ENCODE measurements at regions of chr1 and their contacts with region 1.

Region 1: GRCh38 chr1:222171005-222171404 is 376.9 kb downstream of the HHIPL2 start:
- DNase-seq: peak; percentile 23
- ATAC-seq: peak; percentile 86
- H3K4me3 ChIP-seq: no peak overlapping the region
- H3K27ac ChIP-seq: no peak overlapping the region
- H3K4me1 ChIP-seq: no peaks in the 10 kb centered on the region
- H3K27me3 ChIP-seq: no peaks in the 10 kb centered on the region
- CTCF ChIP-seq: peak; percentile 47 to 78 (median 66)
- EP300 ChIP-seq: no peak
- POLR2A ChIP-seq: no peak
- RAD21 ChIP-seq: peak; percentile 78

Region 2: DNA sequence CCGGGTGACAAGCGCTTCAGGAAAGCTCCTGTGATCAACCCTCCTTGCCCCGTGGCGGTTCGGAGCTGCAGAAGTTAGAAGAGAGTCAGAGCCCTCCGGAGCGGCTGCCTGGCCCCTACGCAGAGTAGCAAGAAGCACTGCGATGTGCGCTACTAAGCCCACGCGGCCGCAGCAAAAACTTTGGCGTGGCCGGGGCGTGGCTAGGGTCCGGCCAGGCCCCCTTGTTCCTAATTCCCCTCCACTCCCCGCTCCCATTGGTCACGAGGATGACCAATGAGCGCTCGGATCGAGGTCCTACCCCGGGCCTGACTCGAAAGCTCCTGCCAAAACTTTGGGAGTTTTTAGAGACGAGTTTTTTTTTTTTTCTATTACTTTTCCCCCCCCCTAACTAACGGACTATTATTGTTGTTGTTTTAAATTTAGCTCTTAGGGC is 1291.9 kb before region 1 on chr1 and contains the start of gene HLX:
- CTCF ChIA-PET with region 1: interaction called, 3 read pairs
- POLR2A ChIA-PET with region 1: no interaction called
- RAD21 ChIA-PET with region 1: interaction called, 4 read pairs
- SMC1A ChIA-PET with region 1: no interaction called
- in situ Hi-C with region 1: no loop called
- intact Hi-C with region 1: loop called (anchors 10 kb)
- DNase-seq: no peak
- ATAC-seq: peak; percentile 82
- H3K4me3 ChIP-seq: peak within 1 kb of the TSS; percentile 68
- H3K27ac ChIP-seq: no peak within 1 kb of the TSS
- H3K4me1 ChIP-seq: peaks cover 15% of the 10 kb centered on the region
- H3K27me3 ChIP-seq: peaks cover 0 to 17% of the 10 kb centered on the region in 2 experiments; a peak in 3 of 4 replicates
- CTCF ChIP-seq: no peak
- EP300 ChIP-seq: no peak
- POLR2A ChIP-seq: no peak
- RAD21 ChIP-seq: no peak
- polyA plus RNA-seq, gene HLX: 0.11 to 0.22 TPM

Region 3: DNA sequence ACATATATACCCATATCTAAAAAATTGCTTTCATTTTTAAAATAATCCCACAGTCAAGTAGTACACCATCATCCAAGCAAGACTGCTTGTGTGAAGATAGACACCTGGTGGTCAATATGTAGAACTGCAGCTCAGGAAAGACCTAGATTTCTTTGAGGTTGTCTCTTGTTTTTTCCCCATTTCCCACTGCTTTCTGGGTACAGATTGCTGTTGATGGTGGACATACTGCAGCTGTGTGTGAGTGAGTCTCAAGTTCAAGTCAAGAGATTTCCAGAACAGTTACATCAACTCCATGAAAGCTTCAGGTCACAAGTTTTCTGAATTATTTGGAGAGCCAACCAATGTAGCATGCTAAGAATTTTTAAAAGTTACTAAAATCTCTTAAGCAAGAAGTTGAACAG is 735.5 kb before region 1 on chr1:
- CTCF ChIA-PET with region 1: interaction called, 15 read pairs
- POLR2A ChIA-PET with region 1: no interaction called
- RAD21 ChIA-PET with region 1: interaction called, 10 read pairs
- SMC1A ChIA-PET with region 1: interaction called, 3 read pairs
- in situ Hi-C with region 1: no loop called
- intact Hi-C with region 1: loop called (anchors 5 kb)
- DNase-seq: no peak
- ATAC-seq: peak; percentile 55
- H3K4me3 ChIP-seq: no peak overlapping the region
- H3K27ac ChIP-seq: no peak overlapping the region
- H3K4me1 ChIP-seq: 0 out of 2 replicates have a peak, but pooled peaks cover 4% of the 10 kb centered on the region
- H3K27me3 ChIP-seq: no peaks in the 10 kb centered on the region
- CTCF ChIP-seq: peak; percentile 78 to 90 (median 80)
- EP300 ChIP-seq: no peak
- POLR2A ChIP-seq: no peak
- RAD21 ChIP-seq: peak; percentile 88

Region 4: DNA sequence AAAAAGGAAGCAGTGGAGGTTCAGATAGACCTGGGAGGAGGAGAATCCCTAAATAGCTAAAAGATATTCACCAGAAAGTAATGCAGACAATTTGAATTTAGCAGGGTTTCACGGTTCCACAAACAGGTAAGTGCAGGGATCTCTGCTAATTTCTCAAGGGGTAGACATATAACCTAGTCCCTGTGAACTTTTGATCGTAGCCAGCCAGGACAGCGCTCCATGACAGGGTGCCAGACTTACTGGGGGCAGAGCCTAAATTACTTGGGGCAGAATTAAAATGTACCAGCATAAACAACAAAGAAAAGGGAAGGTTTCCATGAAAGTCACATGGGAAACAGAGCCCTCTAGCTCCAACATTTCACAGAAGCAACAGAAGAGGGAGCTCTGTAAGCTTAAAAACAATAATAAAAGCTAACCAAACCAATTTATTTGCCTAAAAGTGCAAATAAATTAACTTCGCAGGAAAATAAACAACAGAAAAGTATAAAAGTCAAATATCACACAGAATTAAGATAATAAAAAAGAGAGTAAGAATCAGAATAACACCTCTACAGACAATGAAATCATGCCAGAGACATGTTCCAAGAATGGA is 627.4 kb before region 1 on chr1:
- CTCF ChIA-PET with region 1: interaction called, 19 read pairs
- POLR2A ChIA-PET with region 1: no interaction called
- RAD21 ChIA-PET with region 1: interaction called, 19 read pairs
- SMC1A ChIA-PET with region 1: interaction called, 9 read pairs
- in situ Hi-C with region 1: no loop called
- intact Hi-C with region 1: loop called (anchors 5 kb)
- DNase-seq: no peak
- ATAC-seq: peak; percentile 64
- H3K4me3 ChIP-seq: no peak overlapping the region
- H3K27ac ChIP-seq: no peak overlapping the region
- H3K4me1 ChIP-seq: no peaks in the 10 kb centered on the region
- H3K27me3 ChIP-seq: no peaks in the 10 kb centered on the region
- CTCF ChIP-seq: peak; percentile 39 to 57 (median 53); a peak in 5 of 6 replicates
- EP300 ChIP-seq: no peak
- POLR2A ChIP-seq: no peak
- RAD21 ChIP-seq: peak; percentile 66

Region 5: GRCh38 chr1:221736714-221737113 is 434.3 kb before region 1 on chr1:
- CTCF ChIA-PET with region 1: interaction called, 4 read pairs
- POLR2A ChIA-PET with region 1: no interaction called
- RAD21 ChIA-PET with region 1: interaction called, 7 read pairs
- SMC1A ChIA-PET with region 1: interaction called, 4 read pairs
- in situ Hi-C with region 1: no loop called
- intact Hi-C with region 1: loop called (anchors 2 kb)
- DNase-seq: no peak
- ATAC-seq: peak; percentile 47
- H3K4me3 ChIP-seq: peak overlapping the region; percentile 90
- H3K27ac ChIP-seq: no peak overlapping the region
- H3K4me1 ChIP-seq: peaks cover 11% of the 10 kb centered on the region
- H3K27me3 ChIP-seq: no peaks in the 10 kb centered on the region
- CTCF ChIP-seq: no peak
- EP300 ChIP-seq: no peak
- POLR2A ChIP-seq: 0 out of 2 replicates have a peak, but pooled peaks have one; percentile 25
- RAD21 ChIP-seq: no peak

Region 6: GRCh38 chr1:222048094-222048595 is 122.9 kb before region 1 on chr1:
- CTCF ChIA-PET with region 1: no interaction called
- POLR2A ChIA-PET with region 1: no interaction called
- RAD21 ChIA-PET with region 1: no interaction called
- SMC1A ChIA-PET with region 1: no interaction called
- in situ Hi-C with region 1: no loop called
- intact Hi-C with region 1: no loop called
- DNase-seq: peak; percentile 54
- ATAC-seq: peak; percentile 94
- H3K4me3 ChIP-seq: no peak overlapping the region
- H3K27ac ChIP-seq: peak overlapping the region; percentile 58
- H3K4me1 ChIP-seq: peaks cover 5% of the 10 kb centered on the region
- H3K27me3 ChIP-seq: no peaks in the 10 kb centered on the region
- CTCF ChIP-seq: no peak
- EP300 ChIP-seq: peak; percentile 63 to 88; a peak in 3 of 4 replicates
- POLR2A ChIP-seq: no peak
- RAD21 ChIP-seq: no peak

Measured in GM12878 (cell line).